Activated T-helper 2 cell treated with anti-CD3 and anti-CD28 coated beads, Interferon-gamma antibody, Interleukin-2, Interleukin-4, amounts not matched to agents 10 μg/mL and 5 μg/mL and 100 μg/mL, durations not matched to agents 14 hours and 24 hours and 36 hours (primary cell): ENCODE measurements at regions of chr16 and their contacts with region 1.

Region 1: DNA sequence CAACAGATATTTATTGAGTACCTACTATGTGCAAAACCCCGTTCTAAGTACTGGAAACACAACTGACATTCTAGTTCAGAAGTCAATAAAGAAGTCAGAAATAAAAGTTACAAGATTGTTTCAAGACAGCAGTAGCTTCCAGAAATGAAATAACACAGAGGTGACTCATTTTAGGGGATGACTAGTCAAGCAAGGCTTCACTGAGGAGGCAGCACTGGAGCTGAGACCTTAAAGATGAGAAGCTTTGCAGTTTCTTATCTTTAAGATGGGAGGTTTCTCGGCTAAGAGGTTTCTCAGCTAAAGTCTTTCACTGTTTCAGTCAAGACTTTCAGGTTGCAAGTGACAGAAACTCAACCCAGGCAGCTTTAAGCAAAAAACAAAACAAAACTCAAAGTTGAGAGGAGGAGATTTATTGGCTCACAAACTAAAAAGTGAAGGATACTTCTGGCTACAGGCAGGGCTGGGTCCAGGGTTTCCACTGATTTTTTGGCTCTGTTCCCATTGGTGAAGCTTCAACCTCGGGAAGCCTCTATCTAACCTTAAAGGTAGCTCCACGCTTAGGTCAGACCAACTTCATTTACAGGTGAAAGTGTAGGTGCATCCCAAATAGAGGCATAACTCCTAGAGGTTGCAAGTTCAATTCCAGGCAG is 7.4 kb upstream of the MMP2 start:
- DNase-seq: no peak
- H3K4me3 Mint-ChIP-seq: no peak overlapping the region
- H3K27ac Mint-ChIP-seq: peak overlapping the region; percentile 85
- H3K4me1 Mint-ChIP-seq: peaks cover 14% of the 10 kb centered on the region
- H3K27me3 Mint-ChIP-seq: peaks cover 5% of the 10 kb centered on the region

Region 2: DNA sequence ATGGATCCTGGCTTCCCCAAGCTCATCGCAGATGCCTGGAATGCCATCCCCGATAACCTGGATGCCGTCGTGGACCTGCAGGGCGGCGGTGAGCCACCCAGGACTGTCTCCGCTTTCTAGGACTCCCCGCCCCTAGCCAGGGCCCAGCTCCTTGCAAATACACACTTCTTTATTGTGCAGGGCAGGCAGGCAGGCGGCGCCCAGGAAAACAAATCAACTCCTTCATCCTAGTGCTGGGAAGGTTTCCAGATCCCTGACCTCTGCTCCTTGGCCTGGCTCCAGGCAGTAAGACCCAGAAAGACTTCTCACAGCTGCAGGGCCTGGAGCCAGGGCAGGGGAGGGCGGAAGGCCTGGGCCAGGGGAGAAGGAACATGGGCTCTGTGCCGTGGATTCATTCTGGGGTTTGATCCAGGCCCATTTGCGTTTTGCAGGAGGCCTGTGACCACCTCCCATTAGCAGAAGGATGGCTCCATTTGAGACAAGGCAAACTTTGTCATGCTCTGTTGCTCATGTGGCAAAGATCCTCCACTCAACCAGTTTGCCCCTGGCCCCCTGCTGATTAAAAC is 31.3 kb after region 1 on chr16:
- intact Hi-C with region 1: loop called (anchors 1 kb)
- DNase-seq: no peak
- H3K4me3 Mint-ChIP-seq: no peak overlapping the region
- H3K27ac Mint-ChIP-seq: no peak overlapping the region
- H3K4me1 Mint-ChIP-seq: peaks cover 23% of the 10 kb centered on the region
- H3K27me3 Mint-ChIP-seq: peaks cover 7% of the 10 kb centered on the region

Region 3: DNA sequence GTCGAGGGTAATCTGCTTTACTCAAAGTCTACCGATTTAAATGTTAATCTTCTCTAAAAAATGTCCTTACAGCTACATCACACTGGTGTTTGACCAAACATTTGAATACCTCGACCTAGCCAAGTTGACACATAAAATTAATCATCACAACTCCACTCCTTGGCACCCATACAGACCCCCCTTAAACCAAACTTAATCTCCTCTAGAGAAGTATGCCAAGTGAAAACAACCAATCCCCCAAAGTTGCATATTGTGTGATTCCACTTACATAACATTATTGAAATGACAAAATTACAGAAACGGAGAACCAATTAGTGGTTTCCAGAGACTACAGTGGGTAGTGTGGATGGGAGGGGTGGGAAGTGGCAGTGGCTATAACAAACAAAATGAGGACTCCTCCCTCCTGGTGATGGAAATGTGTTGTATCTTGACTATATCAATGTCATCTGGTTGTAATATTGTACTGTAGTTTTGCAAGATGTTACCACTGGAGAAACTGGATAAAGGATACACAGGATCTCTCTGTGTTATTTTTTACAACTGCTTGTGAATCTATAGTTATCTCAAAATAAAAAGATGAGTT is 134.3 kb after region 1 on chr16:
- intact Hi-C with region 1: no loop called
- DNase-seq: no peak
- H3K4me3 Mint-ChIP-seq: no peak overlapping the region
- H3K27ac Mint-ChIP-seq: no peak overlapping the region
- H3K4me1 Mint-ChIP-seq: no peaks in the 10 kb centered on the region
- H3K27me3 Mint-ChIP-seq: peaks cover 3% of the 10 kb centered on the region